HAP-1 (cell line): ENCODE measurements at regions of chr1 and their contacts with region 1.

Region 1: DNA sequence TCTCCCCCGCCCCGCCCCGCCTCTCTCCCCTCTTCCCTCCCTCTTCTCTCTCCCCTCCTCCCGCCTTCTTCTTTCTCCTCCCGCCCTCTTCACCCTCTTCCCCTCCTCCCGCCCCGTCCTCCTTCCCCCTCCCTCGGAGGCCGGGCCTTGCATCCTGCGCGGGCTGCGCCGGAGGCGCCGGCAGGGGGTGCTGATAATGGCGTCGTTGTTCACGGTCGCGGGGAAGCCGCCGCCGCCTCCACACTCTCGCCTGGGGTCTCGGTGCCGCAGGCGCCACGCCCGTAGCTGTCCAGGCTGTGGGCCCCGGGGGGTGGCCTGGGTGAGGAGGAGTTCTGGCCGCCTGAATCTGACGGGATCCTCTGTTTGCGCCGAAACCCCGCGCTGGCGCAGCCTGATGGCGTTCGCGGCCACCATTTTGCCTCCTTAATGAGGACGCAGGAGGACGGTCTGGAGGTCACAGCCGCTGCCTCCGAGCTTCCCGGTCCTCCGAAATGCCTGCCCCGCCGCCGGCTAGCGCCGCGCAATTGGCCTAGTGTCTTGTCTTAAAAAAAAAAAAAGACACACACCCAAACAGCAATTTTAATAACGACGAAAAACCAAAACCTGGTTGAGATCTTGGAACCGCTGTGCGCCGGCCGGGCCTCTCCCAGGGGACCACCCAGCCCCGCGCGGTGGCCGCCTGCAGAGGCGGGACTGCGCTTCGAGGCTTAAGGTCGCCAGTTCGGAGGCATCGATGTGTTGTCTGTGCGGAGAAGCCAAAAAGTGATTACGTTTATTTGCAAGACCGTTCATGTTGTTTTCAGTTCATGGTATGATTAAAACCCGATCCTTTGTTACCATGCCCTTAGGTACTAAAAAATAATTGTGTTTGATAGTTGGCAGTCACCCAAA is 106.6 kb upstream of the HNRNPU start:
- DNase-seq: peak; percentile 94 to 96
- H3K4me3 ChIP-seq: peak overlapping the region; percentile 80
- H3K4me1 ChIP-seq: peaks cover 17% of the 10 kb centered on the region
- H3K27me3 ChIP-seq: no peaks in the 10 kb centered on the region

Region 2: GRCh38 chr1:244864253-244865027 is 106.5 kb before region 1 on chr1 and contains the start of gene HNRNPU:
- in situ Hi-C with region 1: loop called (anchors 5 kb)
- DNase-seq: peak; percentile 91 to 96
- H3K4me3 ChIP-seq: peak within 1 kb of the TSS; percentile 95
- H3K4me1 ChIP-seq: peaks cover 22% of the 10 kb centered on the region
- H3K27me3 ChIP-seq: no peaks in the 10 kb centered on the region

Region 3: GRCh38 chr1:245234217-245235081 is 263.5 kb after region 1 on chr1:
- in situ Hi-C with region 1: no loop called
- DNase-seq: peak in 1 of 2 experiments; percentile 12
- H3K4me3 ChIP-seq: no peak overlapping the region
- H3K4me1 ChIP-seq: no peaks in the 10 kb centered on the region
- H3K27me3 ChIP-seq: no peaks in the 10 kb centered on the region